Aorta (tissue), 5 donors: ENCODE measurements at regions of chrX and their contacts with region 1.

Region 1: DNA sequence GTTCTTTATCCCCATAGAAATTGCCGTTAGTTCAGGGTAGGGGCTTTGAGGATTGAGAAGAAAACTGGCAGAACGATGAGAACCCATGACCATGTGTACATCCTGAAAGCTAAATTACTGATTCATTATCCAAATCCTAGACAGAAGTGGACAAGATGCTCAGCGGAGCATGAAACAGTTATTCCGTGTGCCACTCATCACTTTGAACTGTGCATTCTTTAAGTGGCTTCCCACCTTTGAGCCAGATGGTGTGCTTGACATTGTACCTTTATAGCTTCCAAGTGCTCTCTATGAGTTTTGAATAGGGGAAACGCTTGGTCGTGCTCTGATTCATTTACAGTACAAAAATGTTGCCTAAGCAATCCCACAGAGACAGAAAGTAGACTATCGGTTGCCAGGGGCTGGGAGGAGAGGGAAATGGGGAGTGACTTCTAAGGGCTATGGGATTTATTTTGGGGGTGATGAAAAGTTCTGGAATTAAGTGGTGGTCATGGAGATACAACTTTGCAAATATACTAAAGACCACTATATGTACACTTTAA is 100.0 kb downstream of the DOCK11 start:
- DNase-seq: no peak
- ATAC-seq: peak; percentile 57
- H3K4me3 ChIP-seq: no peak overlapping the region
- H3K27ac ChIP-seq: peak overlapping the region in 1 of 2 donors; percentile 18
- H3K4me1 ChIP-seq: peaks cover 0 to 7% of the 10 kb centered on the region in 2 donors
- H3K27me3 ChIP-seq: no peaks in the 10 kb centered on the region

Region 2: GRCh38 chrX:118464501-118464900 is 131.1 kb before region 1 on chrX:
- intact Hi-C with region 1: loop called in 1 of 2 experiments (anchors 5 kb)
- DNase-seq: no peak
- ATAC-seq: no peak
- H3K4me3 ChIP-seq: no peak overlapping the region
- H3K27ac ChIP-seq: no peak overlapping the region
- H3K4me1 ChIP-seq: no peaks in the 10 kb centered on the region
- H3K27me3 ChIP-seq: no peaks in the 10 kb centered on the region

Region 3: DNA sequence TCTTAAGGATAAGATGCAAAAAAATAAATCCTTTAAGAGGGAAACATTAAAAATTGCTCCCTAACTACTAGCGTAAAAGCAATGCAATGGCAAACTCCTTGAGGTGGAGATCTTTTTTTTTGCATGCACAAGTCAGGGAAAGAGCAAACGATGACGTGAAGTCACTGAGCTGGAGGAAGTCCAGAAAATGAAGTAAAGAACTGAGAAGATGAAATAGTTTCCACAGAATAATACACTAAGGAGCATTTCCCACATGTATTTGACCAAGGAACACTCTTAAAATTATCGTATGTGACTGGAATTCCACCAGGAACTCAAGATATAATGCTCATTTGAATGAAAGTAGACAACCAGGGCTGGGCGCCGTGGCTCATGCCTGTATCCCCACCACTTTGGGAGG is 121.0 kb before region 1 on chrX:
- intact Hi-C with region 1: no loop called
- DNase-seq: no peak
- ATAC-seq: no peak
- H3K4me3 ChIP-seq: no peak overlapping the region
- H3K27ac ChIP-seq: no peak overlapping the region
- H3K4me1 ChIP-seq: no peaks in the 10 kb centered on the region
- H3K27me3 ChIP-seq: no peaks in the 10 kb centered on the region

Region 4: GRCh38 chrX:118528071-118528737 is 67.4 kb before region 1 on chrX:
- intact Hi-C with region 1: no loop called
- DNase-seq: no peak
- ATAC-seq: no peak
- H3K4me3 ChIP-seq: no peak overlapping the region
- H3K27ac ChIP-seq: peak overlapping the region in 1 of 2 donors; percentile 33
- H3K4me1 ChIP-seq: peaks cover 0 to 3% of the 10 kb centered on the region in 2 donors
- H3K27me3 ChIP-seq: no peaks in the 10 kb centered on the region